Dorsolateral prefrontal cortex (tissue), 120 donors: ENCODE measurements at regions of chr20 and their contacts with region 1.

Region 1: GRCh38 chr20:4014031-4014474 is 1.3 kb downstream of the RNF24 start:
- DNase-seq: peak in 3 of 10 donors; percentile 19 to 65 (median 48)
- H3K4me3 ChIP-seq: peak overlapping the region in 58 of 59 donors; percentile 6 to 93 (median 84)
- H3K27ac ChIP-seq: peak overlapping the region in 52 of 59 donors; percentile 13 to 96 (median 77)
- H3K27me3 ChIP-seq: no peaks in the 10 kb centered on the region
- CTCF ChIP-seq: peak in 54 of 56 donors; percentile 25 to 66 (median 52)

Region 2: DNA sequence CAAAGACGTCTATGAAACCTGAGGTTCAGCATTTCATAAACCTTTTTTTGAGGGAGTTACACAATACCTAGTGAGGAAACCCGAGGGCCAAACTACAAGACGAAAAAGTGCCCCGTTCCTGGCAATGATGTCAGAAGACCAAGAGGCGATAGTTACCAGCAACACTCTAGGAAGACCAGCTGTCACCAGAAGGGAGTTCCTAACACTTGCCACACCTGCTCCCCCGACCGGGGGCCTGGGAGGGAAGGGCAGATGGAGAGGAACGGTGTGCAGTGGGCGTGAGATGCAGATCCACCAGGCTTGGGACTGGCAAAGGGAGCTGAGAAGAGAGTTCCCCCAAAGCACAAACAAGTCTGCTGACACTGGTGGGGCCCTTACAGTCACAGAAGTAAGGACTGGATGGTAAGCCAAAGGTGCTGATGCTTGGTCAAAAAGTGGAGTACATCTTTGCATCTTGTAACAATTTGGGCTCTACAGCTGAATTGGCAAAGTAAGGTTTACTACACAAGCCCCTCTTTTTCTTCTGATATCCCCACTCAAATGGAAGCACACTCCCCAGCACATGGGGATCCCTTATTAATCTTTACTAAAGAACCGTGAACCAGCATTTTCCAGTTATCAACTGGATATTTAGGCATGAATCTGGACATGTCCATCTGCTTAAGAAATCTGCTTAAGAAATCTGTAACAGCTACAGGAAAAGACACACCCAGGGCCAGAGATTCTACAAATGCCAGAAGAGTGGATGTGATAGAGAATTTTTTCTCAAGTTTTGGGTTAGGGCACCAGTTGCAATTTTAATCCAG is 86.4 kb before region 1 on chr20:
- intact Hi-C with region 1: loop called (anchors 5 to 10 kb)
- DNase-seq: peak in 2 of 10 donors; percentile 50 to 51
- H3K4me3 ChIP-seq: no peak overlapping the region
- H3K27ac ChIP-seq: peak overlapping the region in 37 of 59 donors; percentile 3 to 76 (median 45)
- H3K27me3 ChIP-seq: no peaks in the 10 kb centered on the region
- CTCF ChIP-seq: no peak

Region 3: DNA sequence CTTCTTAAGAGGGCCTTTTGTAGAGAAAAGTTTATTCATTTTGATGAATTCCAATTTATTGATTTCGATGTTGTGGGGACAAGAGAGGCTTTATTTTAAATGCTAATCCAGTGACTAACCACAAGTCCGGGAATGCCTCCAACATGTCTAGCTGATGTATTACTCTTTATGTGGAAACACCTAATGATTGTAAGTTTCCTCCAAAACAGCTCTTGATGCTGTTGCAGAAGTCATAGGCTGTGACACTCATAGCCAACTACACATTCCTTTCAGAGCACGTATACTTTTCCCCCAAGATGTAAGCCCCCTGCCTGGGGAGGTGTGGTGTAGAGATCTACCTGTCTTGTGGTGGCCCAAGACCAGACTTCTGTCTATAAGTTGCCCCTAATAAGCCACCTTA is 62.6 kb after region 1 on chr20:
- intact Hi-C with region 1: loop called (anchors 5 kb)
- DNase-seq: no peak
- H3K4me3 ChIP-seq: no peak overlapping the region
- H3K27ac ChIP-seq: no peak overlapping the region
- H3K27me3 ChIP-seq: no peaks in the 10 kb centered on the region
- CTCF ChIP-seq: no peak

Region 4: DNA sequence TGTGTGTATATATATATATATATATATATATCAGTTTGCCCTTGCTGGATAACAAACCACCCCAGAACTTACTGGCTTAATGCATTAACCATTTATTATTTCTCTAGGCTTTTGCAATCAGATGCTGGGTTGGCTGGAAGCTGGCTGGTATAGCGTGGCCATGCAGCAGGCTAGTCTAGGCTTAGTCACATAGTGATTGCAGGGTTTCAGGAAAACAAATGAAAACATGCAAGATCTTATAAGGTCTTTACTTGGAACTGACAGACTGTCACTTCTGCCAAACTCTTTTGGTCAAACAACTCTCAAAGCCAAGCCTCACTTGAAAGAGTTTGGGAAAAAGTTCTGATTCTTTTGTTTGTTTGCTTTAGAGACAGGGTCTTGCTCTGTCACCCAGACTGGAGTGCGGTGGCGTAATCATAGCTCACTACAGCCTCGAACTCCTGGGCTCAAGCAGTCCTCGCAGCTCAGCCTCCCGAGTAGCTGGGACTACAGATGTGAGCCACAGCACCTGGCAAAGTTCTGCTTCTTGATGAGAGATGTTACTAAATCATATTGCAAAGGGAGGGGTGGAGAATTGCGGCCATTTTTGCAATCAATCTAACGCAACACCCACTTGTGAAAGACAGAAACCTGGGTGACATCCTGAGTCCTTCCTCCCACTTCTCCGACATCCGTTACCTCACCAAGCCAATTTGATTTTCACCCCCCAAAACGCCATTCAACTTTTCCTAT is 75.9 kb after region 1 on chr20:
- intact Hi-C with region 1: loop called in 1 of 2 experiments (anchors 5 kb)
- DNase-seq: no peak
- H3K4me3 ChIP-seq: no peak overlapping the region
- H3K27ac ChIP-seq: peak overlapping the region in 2 of 59 donors; percentile 8 to 16
- H3K27me3 ChIP-seq: no peaks in the 10 kb centered on the region
- CTCF ChIP-seq: no peak